Caco-2 (cell line): ENCODE measurements at regions of chr2 and their contacts with region 1.

Region 1: GRCh38 chr2:176001916-176002687 is at the start of gene LNPK:
- DNase-seq: peak; percentile 92 to 94
- H3K4me3 ChIP-seq: peak within 1 kb of the TSS; percentile 58
- H3K4me3 Mint-ChIP-seq: peak within 1 kb of the TSS; percentile 79
- H3K27ac Mint-ChIP-seq: peak within 1 kb of the TSS; percentile 66
- H3K4me1 ChIP-seq: 0 out of 2 replicates have a peak, but pooled peaks cover 8% of the 10 kb centered on the region
- H3K4me1 Mint-ChIP-seq: peaks cover 7% of the 10 kb centered on the region
- H3K27me3 ChIP-seq: no peaks in the 10 kb centered on the region
- H3K27me3 Mint-ChIP-seq: peaks cover 10% of the 10 kb centered on the region
- CTCF ChIP-seq: no peak
- total RNA-seq, gene LNPK: 18.1 and 19.1 TPM in 2 replicates

Region 2: DNA sequence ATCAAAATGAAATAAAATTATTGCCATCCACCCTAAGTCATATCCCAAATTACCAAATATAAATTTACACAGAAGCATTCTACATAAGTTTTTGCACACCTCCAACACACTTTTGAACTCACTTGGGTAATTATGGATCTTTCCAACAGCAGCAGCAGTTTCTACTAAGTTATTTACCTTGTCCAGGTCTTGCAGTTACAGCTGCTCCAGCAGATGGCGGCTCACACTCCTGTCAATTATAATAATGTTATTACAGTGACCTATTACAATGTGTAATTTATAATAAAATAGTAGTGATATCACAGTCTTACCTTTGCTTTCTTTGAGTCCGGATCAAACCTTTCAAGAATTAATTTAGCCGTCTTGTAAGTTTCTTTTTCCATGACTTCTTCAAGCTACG is 37.9 kb before region 1 on chr2:
- CTCF ChIA-PET with region 1: no interaction called
- POLR2A ChIA-PET with region 1: no interaction called
- intact Hi-C with region 1: loop called (anchors 5 kb)
- DNase-seq: peak in 1 of 2 experiments; percentile 27
- H3K4me3 ChIP-seq: no peak overlapping the region
- H3K4me3 Mint-ChIP-seq: no peak overlapping the region
- H3K27ac Mint-ChIP-seq: no peak overlapping the region
- H3K4me1 ChIP-seq: no peaks in the 10 kb centered on the region
- H3K4me1 Mint-ChIP-seq: no peaks in the 10 kb centered on the region
- H3K27me3 ChIP-seq: no peaks in the 10 kb centered on the region
- H3K27me3 Mint-ChIP-seq: no peaks in the 10 kb centered on the region
- CTCF ChIP-seq: peak; percentile 51 to 52